GM12878 (cell line): ENCODE measurements at regions of chr10 and their contacts with region 1.

Region 1: GRCh38 chr10:14742815-14743214 is 31.9 kb downstream of the FAM107B start:
- DNase-seq: peak; percentile 76
- ATAC-seq: peak; percentile 92
- H3K4me3 ChIP-seq: no peak overlapping the region
- H3K27ac ChIP-seq: peak overlapping the region; percentile 69
- H3K4me1 ChIP-seq: peaks cover 32% of the 10 kb centered on the region
- H3K27me3 ChIP-seq: no peaks in the 10 kb centered on the region
- CTCF ChIP-seq: no peak
- EP300 ChIP-seq: peak; percentile 90 to 98; a peak in 3 of 4 replicates
- POLR2A ChIP-seq: no peak
- RAD21 ChIP-seq: no peak

Region 2: GRCh38 chr10:14659626-14660196 is 83.1 kb before region 1 on chr10:
- CTCF ChIA-PET with region 1: no interaction called
- POLR2A ChIA-PET with region 1: interaction called, 5 read pairs
- RAD21 ChIA-PET with region 1: interaction called, 6 read pairs
- SMC1A ChIA-PET with region 1: interaction called, 11 read pairs
- in situ Hi-C with region 1: loop called (anchors 5 kb)
- intact Hi-C with region 1: loop called (anchors 1 kb)
- DNase-seq: peak; percentile 88
- ATAC-seq: peak; percentile 87
- H3K4me3 ChIP-seq: peak overlapping the region; percentile 26; the same call in 1 of the 2 replicates
- H3K27ac ChIP-seq: peak overlapping the region; percentile 33
- H3K4me1 ChIP-seq: peaks cover 43% of the 10 kb centered on the region
- H3K27me3 ChIP-seq: no peaks in the 10 kb centered on the region; a peak in 1 of 4 replicates
- CTCF ChIP-seq: no peak
- EP300 ChIP-seq: peak; percentile 87 to 96
- POLR2A ChIP-seq: no peak
- RAD21 ChIP-seq: peak; percentile 12; the same call in 1 of the 2 replicates